Common myeloid progenitor, CD34-positive (primary cell): ENCODE measurements at regions of chr7 and their contacts with region 1.

Region 1: GRCh38 chr7:141722529-141722928 is 14.4 kb downstream of the WEE2 start:
- DNase-seq: no peak
- H3K4me3 ChIP-seq: no peak overlapping the region
- H3K27ac ChIP-seq: no peak overlapping the region
- H3K4me1 ChIP-seq: no peaks in the 10 kb centered on the region
- H3K27me3 ChIP-seq: no peaks in the 10 kb centered on the region

Region 2: GRCh38 chr7:141402277-141402996 is 320.1 kb before region 1 on chr7:
- CTCF ChIA-PET with region 1: no interaction called
- POLR2A ChIA-PET with region 1: no interaction called
- DNase-seq: no peak
- H3K4me3 ChIP-seq: no peak overlapping the region
- H3K27ac ChIP-seq: no peak overlapping the region
- H3K4me1 ChIP-seq: no peaks in the 10 kb centered on the region
- H3K27me3 ChIP-seq: peaks cover 0 to 10% (median 0%) of the 10 kb centered on the region in 5 experiments

Region 3: GRCh38 chr7:141710301-141710700 is 12.2 kb before region 1 on chr7:
- CTCF ChIA-PET with region 1: interaction called, 11 read pairs
- POLR2A ChIA-PET with region 1: no interaction called
- DNase-seq: peak in 2 of 3 donors; percentile 34 to 36
- H3K4me3 ChIP-seq: no peak overlapping the region
- H3K27ac ChIP-seq: no peak overlapping the region
- H3K4me1 ChIP-seq: no peaks in the 10 kb centered on the region
- H3K27me3 ChIP-seq: no peaks in the 10 kb centered on the region